Transverse colon (tissue), 4 donors: ENCODE measurements at regions of chr7 and their contacts with region 1.

Region 1: DNA sequence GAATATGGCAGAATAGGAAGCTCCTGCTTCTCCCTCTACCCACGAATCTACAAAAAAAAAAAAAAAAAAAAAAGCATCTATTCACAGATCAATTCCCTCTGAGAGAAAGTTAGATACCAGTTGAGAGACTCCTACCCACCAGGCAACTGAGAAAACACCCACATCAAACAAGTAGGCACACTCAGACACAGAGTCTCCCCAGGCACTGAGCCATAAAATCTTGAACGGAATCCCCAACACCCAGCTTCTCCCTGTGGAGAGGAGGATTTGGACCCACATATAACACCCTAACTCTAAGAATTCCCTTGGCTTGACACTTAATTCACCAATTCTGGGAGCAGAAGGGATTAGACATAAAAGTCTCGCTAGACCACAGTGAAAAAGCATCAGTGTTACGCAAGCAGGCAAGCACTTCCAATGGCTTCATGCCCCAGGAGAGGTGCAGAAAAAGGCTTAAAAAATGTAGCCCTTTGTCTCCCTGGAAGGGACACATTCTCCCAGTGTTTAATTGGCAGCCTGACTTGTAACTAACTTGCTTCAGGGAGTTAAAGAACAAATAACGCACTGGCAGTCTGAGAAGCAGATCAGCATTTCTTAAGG is 192.2 kb downstream of the ELAPOR2 start:
- DNase-seq: no peak
- H3K4me3 ChIP-seq: no peak overlapping the region
- H3K27ac ChIP-seq: no peak overlapping the region
- H3K4me1 ChIP-seq: no peaks in the 10 kb centered on the region
- H3K27me3 ChIP-seq: no peaks in the 10 kb centered on the region
- CTCF ChIP-seq: no peak
- EP300 ChIP-seq: no peak
- POLR2A ChIP-seq: no peak

Region 2: DNA sequence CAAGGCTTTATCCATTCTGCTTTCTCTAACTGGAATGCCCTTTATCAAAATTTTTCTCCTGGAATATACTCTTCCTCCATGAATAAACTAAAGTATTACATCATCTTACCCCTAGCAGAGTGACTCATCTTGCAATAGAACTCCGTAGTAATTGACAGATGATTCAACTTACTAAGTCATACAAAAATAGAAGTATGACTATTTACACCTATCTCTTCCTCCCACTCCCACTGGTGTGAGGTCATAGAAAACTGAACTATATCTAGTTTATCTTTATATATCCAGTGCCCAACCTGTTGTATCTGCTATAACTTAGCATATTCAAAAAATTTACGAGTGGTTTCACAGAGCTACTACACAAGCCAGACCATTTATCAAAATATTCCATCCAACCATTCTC is 707.4 kb after region 1 on chr7:
- in situ Hi-C with region 1: no loop called
- intact Hi-C with region 1: loop called (anchors 5 kb)
- DNase-seq: no peak
- H3K4me3 ChIP-seq: no peak overlapping the region
- H3K27ac ChIP-seq: peak overlapping the region in 2 of 4 donors; percentile 14 to 31
- H3K4me1 ChIP-seq: peaks cover 0 to 17% (median 6%) of the 10 kb centered on the region in 4 donors
- H3K27me3 ChIP-seq: no peaks in the 10 kb centered on the region
- CTCF ChIP-seq: no peak
- EP300 ChIP-seq: no peak
- POLR2A ChIP-seq: no peak